Adrenal gland (tissue), 19 donors: ENCODE measurements at regions of chr5 and their contacts with region 1.

Region 1: DNA sequence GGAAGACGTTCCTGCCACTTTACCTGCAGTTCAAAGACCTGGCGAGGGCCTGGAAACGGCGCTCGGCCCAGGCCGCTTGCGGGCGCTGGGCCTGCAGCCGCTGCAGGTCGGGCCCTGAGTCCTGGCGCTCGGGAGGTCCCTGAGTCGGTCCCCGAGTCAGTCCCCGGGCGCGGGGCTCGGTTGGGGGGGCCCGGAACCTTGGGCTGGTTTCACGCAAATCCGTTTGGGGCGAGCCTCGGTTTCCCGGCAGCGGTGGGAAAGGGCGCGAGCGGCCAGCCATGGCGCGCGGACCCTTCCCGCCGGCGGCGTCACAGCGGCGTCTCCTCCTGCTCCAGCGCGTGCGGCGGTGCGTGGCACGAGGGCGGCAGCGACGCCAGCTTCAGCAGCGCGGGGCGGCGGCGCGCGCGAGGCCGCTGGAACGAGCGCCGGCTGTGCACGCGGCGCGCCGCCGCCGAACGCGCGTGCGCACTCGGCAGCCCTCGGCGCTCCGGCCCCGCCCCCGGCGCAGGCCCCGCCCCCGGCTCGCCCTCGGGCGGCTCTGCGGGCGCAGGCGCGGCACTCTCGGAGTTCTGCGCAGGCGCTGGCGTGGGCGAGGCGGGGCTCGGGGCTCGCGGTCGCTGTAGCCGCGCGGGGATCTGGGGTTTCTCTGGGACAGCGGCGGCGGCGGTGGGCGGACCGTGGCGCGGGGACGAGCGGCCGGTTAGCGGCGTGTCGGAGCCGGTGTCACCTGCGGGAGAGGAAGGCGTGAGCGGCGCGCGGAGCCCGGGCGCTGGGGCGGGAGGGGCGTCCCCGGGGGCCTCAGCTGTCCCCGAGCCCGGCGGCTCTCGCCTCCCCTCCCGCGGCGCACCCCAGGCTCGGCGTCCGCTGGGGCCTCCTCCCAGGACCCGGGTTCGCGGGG is 29.9 kb downstream of the EXOC3 start:
- DNase-seq: peak; percentile 82 to 92 (median 84)
- H3K4me3 ChIP-seq: peak overlapping the region; percentile 35 to 90 (median 60)
- H3K27ac ChIP-seq: peak overlapping the region in 3 of 5 donors; percentile 74 to 84 (median 77)
- H3K4me1 ChIP-seq: peaks cover 14 to 27% of the 10 kb centered on the region in 2 donors
- H3K27me3 ChIP-seq: peaks cover 12% of the 10 kb centered on the region
- CTCF ChIP-seq: no peak
- POLR2A ChIP-seq: peak; percentile 44 to 63

Region 2: GRCh38 chr5:892394-893136 is 419.7 kb after region 1 on chr5 and contains the starts of genes BRD9 and TRIP13:
- intact Hi-C with region 1: loop called in 1 of 2 experiments (anchors 10 kb)
- DNase-seq: peak; percentile 74 to 83 (median 80)
- H3K4me3 ChIP-seq: peak within 1 kb of the TSS; percentile 1 to 100 (median 64)
- H3K27ac ChIP-seq: peak within 1 kb of the TSS in 4 of 5 donors; percentile 71 to 98 (median 76)
- H3K4me1 ChIP-seq: peaks cover 8 to 17% of the 10 kb centered on the region in 2 donors
- H3K27me3 ChIP-seq: no peaks in the 10 kb centered on the region
- CTCF ChIP-seq: no peak
- POLR2A ChIP-seq: no peak
- total RNA-seq, gene BRD9: 11.3 to 32.4 (median 24.4) TPM
- total RNA-seq, gene TRIP13: 0.30 to 4.2 (median 0.79) TPM